Calu3 (cell line): ENCODE measurements at regions of chr17 and their contacts with region 1.

Region 1: DNA sequence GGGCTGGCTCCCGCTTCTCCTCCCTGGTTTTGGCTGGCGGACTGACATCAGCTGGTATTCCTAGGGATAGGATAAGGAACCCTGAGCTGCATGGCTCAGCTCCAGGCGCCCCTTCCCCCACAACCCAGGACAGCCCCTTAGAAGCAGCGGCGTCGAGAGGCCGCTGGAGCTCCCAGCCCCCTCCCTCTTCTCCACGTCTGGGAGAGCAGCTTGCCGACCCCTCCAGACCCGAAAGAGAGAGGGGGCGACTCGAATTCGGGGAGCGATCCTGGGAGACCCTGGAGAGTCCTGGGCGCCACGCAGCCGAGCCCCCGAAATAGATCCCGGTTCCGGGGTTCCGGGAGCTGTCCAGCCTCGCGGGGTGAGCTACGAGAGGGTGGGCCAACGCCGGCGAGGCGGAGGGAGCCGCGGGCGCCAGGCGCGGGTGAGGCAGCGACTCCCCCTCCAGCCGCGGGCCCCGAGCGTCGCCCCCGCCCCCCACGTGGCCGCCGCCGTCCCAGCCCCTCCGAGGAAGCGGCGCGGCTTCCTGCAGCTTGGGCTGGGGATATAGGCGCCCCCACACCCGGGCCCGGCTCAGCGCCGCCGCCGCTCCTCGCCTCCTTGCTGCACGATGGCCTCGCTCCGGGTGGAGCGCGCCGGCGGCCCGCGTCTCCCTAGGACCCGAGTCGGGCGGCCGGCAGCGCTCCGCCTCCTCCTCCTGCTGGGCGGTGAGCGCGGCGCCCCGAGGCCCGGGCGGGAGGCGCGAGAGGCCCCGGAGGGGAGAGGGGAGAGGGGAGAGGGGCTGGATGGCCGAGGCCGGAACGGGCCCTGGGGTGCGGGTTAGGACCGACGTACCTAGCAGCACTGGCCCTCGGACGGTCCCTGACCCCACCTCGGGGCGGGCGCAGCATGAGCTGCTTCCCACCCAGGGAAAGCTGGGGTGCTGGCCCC is at the start of gene RAMP2:
- DNase-seq: peak; percentile 36
- H3K4me3 Mint-ChIP-seq: peak within 1 kb of the TSS; percentile 58
- H3K27ac Mint-ChIP-seq: no peak within 1 kb of the TSS
- H3K4me1 Mint-ChIP-seq: peaks cover 12% of the 10 kb centered on the region
- H3K27me3 Mint-ChIP-seq: peaks cover 93% of the 10 kb centered on the region
- CTCF ChIP-seq: no peak
- total RNA-seq, gene RAMP2: not detected in 2 replicates

Region 2: DNA sequence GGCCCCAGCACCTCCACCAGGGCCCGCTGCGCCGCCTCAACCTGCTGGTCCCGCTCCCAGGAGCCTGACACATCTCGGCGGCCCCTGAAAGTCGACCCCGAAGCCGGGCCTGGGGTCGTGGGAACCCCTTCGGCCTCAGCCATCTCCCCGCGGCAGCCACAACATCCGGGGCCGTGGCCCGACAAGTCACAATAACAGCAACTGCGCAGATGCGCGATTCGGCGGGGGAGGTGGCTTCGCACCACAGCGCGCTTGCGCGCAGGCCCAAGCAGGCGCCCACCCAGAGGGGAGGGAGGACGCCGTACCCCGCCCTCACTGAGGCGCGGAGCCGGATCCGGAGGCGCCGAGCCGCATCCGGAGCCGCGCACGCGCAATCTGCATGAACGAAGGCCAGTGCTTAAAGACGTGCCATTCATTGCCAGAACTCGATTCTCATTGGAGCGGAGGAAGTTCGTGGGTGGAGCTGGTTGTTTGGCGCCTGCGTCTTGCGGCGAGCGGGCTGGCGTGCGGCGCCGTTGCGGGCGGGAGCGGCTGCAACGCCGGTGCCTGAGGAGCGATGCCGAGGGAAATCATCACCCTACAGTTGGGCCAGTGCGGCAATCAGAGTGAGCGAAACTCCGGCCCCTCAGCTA is 151.6 kb before region 1 on chr17 and contains the starts of genes RETREG3 and TUBG1:
- CTCF ChIA-PET with region 1: interaction called, 10 read pairs
- intact Hi-C with region 1: no loop called
- DNase-seq: peak; percentile 100
- H3K4me3 Mint-ChIP-seq: peak within 1 kb of the TSS; percentile 88
- H3K27ac Mint-ChIP-seq: peak within 1 kb of the TSS; percentile 75
- H3K4me1 Mint-ChIP-seq: no peaks in the 10 kb centered on the region
- H3K27me3 Mint-ChIP-seq: no peaks in the 10 kb centered on the region
- CTCF ChIP-seq: no peak
- total RNA-seq, gene RETREG3: 71.2 and 80.6 TPM in 2 replicates
- total RNA-seq, gene TUBG1: 130 and 133 TPM in 2 replicates

Region 3: GRCh38 chr17:42704837-42705494 is 56.0 kb before region 1 on chr17:
- CTCF ChIA-PET with region 1: no interaction called
- intact Hi-C with region 1: loop called (anchors 10 kb)
- DNase-seq: no peak
- H3K4me3 Mint-ChIP-seq: no peak overlapping the region
- H3K27ac Mint-ChIP-seq: no peak overlapping the region
- H3K4me1 Mint-ChIP-seq: no peaks in the 10 kb centered on the region
- H3K27me3 Mint-ChIP-seq: no peaks in the 10 kb centered on the region
- CTCF ChIP-seq: no peak

Region 4: DNA sequence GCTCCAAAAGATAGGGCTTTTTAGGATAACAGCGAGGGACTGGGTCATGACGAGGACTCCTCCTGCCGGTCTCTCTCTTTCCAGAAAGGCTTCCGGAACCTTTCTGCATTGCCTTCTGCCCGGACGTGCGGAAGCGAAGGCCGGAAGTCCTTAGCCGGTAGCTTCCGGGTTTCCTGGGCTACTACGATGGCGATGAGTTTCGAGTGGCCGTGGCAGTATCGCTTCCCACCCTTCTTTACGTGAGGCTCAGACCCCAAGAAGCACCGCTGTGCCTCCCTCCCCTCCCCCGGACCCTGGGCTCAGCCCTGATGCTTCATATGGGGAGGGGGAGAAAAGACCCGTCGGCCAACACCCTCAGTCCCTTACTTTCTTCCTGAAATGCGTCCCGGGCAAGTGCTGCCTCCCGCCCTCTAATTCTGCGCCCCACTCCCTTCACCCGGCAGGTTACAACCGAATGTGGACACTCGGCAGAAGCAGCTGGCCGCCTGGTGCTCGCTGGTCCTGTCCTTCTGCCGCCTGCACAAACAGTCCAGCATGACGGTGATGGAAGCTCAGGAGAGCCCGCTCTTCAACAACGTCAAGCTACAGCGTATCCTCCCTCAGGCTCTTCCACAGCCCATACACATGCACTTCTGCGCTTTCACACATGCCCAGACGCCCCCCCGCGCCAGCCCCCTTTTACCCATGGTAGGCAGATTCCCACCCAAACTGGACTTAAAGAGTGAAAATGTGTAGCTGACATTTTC is 12.5 kb after region 1 on chr17 and contains the start of gene VPS25:
- CTCF ChIA-PET with region 1: interaction called, 26 read pairs
- intact Hi-C with region 1: no loop called
- DNase-seq: peak; percentile 88
- H3K4me3 Mint-ChIP-seq: peak within 1 kb of the TSS; percentile 90
- H3K27ac Mint-ChIP-seq: peak within 1 kb of the TSS; percentile 78
- H3K4me1 Mint-ChIP-seq: peaks cover 18% of the 10 kb centered on the region
- H3K27me3 Mint-ChIP-seq: peaks cover 1% of the 10 kb centered on the region
- CTCF ChIP-seq: no peak
- total RNA-seq, gene VPS25: 93.9 and 101 TPM in 2 replicates

Region 5: DNA sequence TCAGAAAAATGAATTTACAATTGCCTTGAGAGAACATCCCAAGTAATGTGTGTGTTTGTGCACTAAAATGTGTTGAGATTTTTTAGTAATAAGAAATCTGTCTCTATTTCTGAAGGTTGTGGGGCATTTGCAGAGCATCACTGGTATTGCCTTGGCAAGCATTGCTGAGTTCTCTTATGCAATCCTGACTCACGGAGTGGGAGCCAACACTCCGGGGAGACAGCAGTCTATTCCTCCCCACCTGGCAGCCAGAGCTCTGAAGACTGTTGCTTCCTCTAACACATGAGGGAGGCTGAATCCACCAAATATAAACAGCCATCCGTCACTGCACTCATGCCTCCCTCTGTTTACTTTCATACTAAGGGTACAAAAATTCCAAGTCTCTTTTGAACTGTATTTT is 48.3 kb after region 1 on chr17:
- CTCF ChIA-PET with region 1: no interaction called
- intact Hi-C with region 1: no loop called
- DNase-seq: no peak
- H3K4me3 Mint-ChIP-seq: no peak overlapping the region
- H3K27ac Mint-ChIP-seq: no peak overlapping the region
- H3K4me1 Mint-ChIP-seq: no peaks in the 10 kb centered on the region
- H3K27me3 Mint-ChIP-seq: no peaks in the 10 kb centered on the region
- CTCF ChIP-seq: no peak

Region 6: DNA sequence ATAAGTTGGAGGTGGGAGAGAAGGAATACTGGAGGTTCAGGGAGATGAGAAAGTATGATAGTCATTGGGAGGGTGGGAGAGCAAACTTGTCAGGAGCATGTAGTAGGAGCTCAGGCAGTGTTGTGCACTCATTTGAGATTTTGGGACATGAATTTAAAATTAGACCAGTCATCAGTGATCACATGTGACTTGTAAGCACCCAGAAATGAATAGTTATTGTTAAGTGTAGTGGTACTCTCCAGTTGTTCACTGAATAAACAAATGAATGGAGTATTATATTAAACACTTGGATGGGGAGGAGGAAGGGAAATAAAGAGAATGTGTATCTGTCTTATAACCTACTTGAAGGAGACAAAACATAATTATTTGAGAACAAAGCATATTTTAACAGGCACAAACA is 70.1 kb after region 1 on chr17:
- CTCF ChIA-PET with region 1: no interaction called
- intact Hi-C with region 1: no loop called
- DNase-seq: no peak
- H3K4me3 Mint-ChIP-seq: no peak overlapping the region
- H3K27ac Mint-ChIP-seq: no peak overlapping the region
- H3K4me1 Mint-ChIP-seq: peaks cover 19% of the 10 kb centered on the region
- H3K27me3 Mint-ChIP-seq: peaks cover 16% of the 10 kb centered on the region
- CTCF ChIP-seq: no peak

Region 7: DNA sequence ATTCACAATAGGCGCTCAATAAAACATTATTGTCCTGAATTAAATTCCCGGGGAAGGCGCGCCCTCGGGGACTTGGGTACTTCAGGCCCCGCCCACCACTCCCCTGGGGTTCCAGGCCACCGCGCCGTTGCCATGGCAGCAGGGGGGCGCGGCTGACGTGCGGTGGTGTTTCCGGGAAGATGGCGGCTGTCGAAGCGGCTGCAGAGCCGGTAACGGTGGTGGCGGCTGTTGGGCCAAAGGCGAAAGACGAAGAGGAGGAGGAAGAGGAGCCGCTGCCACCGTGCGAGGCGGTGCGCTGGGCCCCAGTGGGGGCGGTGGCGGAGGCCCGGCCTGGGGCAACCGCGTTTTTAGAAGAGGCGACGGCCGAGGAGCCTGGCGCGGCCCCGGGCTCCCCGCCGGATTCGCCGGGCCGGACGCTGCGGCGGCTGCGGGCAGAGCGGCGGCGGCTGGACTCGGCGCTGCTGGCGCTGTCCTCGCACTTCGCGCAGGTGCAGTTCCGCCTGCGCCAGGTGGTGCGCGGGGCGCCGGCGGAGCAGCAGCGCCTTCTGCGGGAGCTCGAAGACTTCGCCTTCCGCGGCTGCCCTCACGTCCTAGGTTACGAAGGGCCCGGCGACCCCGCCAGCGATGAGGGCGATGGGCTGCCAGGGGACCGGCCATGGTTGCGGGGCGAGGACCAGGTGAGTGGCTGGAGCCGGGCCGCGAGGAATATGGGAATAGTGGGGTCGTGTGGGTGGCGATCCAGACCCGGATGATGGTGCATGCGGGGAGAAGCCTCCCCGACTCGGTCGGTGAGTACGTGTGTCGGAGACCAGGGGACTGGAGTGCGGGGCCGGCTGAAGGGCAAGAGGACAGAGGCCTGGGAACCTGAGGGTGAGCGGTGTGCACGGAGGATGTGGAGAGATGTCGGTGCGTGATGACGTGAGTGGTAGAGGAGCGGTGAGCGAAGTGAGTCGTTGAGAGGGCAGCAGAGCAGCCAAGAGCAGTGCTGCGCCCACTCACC is 219.8 kb after region 1 on chr17 and contains the start of gene RUNDC1:
- CTCF ChIA-PET with region 1: interaction called, 10 read pairs
- intact Hi-C with region 1: no loop called
- DNase-seq: peak; percentile 99
- H3K4me3 Mint-ChIP-seq: peak within 1 kb of the TSS; percentile 98
- H3K27ac Mint-ChIP-seq: peak within 1 kb of the TSS; percentile 86
- H3K4me1 Mint-ChIP-seq: peaks cover 33% of the 10 kb centered on the region
- H3K27me3 Mint-ChIP-seq: no peaks in the 10 kb centered on the region
- CTCF ChIP-seq: peak; percentile 20
- total RNA-seq, gene RUNDC1: 32.8 and 35.4 TPM in 2 replicates